SK-N-SH (cell line): ENCODE measurements at regions of chr11 and their contacts with region 1.

Region 1: GRCh38 chr11:61871158-61871597 is 20.2 kb downstream of the FADS3 start:
- DNase-seq: peak; percentile 94
- H3K4me3 ChIP-seq: peak overlapping the region; percentile 12 to 17; a peak in 2 of 4 replicates
- H3K27ac ChIP-seq: no peak overlapping the region
- H3K4me1 ChIP-seq: peaks cover 0 to 13% of the 10 kb centered on the region in 2 experiments; a peak in 2 of 4 replicates
- H3K27me3 ChIP-seq: no peaks in the 10 kb centered on the region
- CTCF ChIP-seq: peak; percentile 89
- EP300 ChIP-seq: no peak
- RAD21 ChIP-seq: peak; percentile 88

Region 2: DNA sequence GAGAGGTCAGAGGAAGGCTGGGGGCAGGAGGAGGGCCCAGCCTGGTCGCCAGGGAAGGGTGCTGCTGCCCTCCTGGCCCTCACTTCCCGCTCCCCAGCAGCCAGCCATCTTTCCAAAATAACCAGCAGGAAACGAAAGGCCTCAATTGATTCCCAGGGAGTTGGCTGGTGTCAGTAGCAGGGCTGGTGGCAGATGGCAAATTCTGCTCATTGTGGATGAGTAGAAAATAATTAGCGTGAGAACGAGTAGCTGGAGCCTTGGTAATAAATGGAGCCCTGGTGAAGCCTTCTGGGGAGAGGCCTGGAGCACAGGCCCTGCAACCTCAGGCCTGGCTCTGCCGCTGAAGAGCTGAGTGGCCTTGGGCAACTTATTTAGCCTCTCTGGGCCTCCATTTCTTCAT is 159.7 kb before region 1 on chr11:
- CTCF ChIA-PET with region 1: no interaction called
- POLR2A ChIA-PET with region 1: no interaction called
- DNase-seq: peak; percentile 56
- H3K4me3 ChIP-seq: no peak overlapping the region
- H3K27ac ChIP-seq: peak overlapping the region in 1 of 2 experiments; percentile 48; a peak in 1 of 4 replicates
- H3K4me1 ChIP-seq: peaks cover 0 to 18% of the 10 kb centered on the region in 2 experiments; a peak in 1 of 4 replicates
- H3K27me3 ChIP-seq: no peaks in the 10 kb centered on the region
- CTCF ChIP-seq: no peak
- EP300 ChIP-seq: no peak
- RAD21 ChIP-seq: no peak

Region 3: GRCh38 chr11:61827571-61828378 is 43.4 kb before region 1 on chr11 and contains the start of gene FADS2:
- CTCF ChIA-PET with region 1: interaction called, 19 read pairs
- POLR2A ChIA-PET with region 1: no interaction called
- DNase-seq: peak; percentile 93
- H3K4me3 ChIP-seq: peak within 1 kb of the TSS; percentile 70 to 96
- H3K27ac ChIP-seq: peak within 1 kb of the TSS; percentile 21 to 99
- H3K4me1 ChIP-seq: peaks cover 10 to 46% of the 10 kb centered on the region in 2 experiments; a peak in 3 of 4 replicates
- H3K27me3 ChIP-seq: no peaks in the 10 kb centered on the region
- CTCF ChIP-seq: no peak
- EP300 ChIP-seq: peak; percentile 16 to 32; a peak in 2 of 4 replicates
- RAD21 ChIP-seq: no peak
- polyA plus RNA-seq, gene FADS2: 67.8 and 77.1 TPM in 2 replicates

Region 4: DNA sequence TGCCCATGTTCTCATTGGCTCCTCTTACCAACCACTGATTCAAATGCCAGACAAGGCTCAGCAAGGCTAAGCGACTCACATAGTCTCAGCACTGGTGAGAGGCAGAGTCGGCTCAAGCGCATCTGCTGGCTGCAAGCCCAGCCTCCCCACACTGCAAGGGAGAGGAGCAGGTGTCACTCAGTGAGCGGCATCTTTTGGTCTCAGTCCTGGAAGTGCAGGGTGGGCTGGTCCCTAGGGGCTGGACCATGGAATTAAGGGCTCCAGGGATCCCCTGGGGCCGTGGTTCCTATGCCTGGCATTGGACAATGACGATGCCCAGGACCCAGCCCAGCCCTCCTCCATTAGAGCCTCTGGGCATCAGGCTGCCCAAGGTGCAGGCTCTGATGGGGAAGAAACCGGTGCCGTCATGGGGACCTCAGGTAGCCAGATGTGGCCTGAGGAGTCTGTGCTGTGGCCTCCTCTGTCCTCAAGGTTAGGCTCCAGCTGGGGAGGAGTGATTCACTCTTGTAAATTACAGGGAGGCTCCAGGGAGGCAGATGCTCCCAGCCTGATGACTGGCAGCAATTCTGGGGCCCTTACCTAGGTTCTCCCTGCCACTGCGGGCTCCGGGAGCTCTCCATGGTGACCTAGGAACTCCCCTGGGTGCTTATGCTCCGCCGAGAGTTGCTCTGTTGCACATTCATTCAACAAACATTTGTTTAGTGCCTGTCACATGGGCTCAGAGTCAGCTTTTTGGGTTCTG is 15.1 kb before region 1 on chr11:
- CTCF ChIA-PET with region 1: interaction called, 10 read pairs
- POLR2A ChIA-PET with region 1: no interaction called
- DNase-seq: no peak
- H3K4me3 ChIP-seq: no peak overlapping the region
- H3K27ac ChIP-seq: no peak overlapping the region; a peak in 1 of 4 replicates
- H3K4me1 ChIP-seq: peaks cover 3 to 7% of the 10 kb centered on the region in 2 experiments; a peak in 2 of 4 replicates
- H3K27me3 ChIP-seq: no peaks in the 10 kb centered on the region
- CTCF ChIP-seq: no peak
- EP300 ChIP-seq: no peak
- RAD21 ChIP-seq: no peak

Region 5: DNA sequence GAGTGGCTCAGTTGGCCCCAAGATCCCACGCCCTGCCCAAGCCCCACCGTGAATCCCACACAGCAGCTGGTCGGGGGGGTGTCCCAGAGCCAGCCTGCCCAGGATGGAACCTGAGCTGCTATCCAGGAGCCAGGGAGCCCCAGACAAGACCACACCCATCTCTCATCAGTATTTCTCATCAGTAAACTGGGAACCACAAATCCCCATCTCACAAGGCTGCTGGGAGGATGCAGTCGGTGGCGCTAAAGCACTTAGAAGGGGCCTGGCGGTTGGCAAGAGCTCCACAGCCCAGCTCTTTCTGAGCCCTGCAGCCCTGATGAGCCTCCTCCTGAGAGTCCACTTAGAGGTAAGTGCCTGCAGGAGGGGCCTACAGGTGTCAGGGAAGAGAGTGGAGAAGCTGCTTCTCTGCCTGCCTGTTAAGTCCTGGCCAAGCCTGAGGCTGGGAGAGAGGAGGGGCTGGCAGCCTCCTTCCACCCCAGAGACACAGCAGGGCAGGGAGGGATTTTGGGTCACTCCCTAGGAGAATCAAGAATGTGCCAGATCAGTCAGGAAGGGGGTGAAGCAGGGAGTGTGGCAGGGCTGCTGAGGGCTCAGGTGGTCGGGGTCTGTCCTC is 14.1 kb after region 1 on chr11:
- CTCF ChIA-PET with region 1: interaction called, 18 read pairs
- POLR2A ChIA-PET with region 1: interaction called, 3 read pairs
- DNase-seq: no peak
- H3K4me3 ChIP-seq: no peak overlapping the region
- H3K27ac ChIP-seq: no peak overlapping the region
- H3K4me1 ChIP-seq: peaks cover 7 to 11% of the 10 kb centered on the region in 2 experiments; a peak in 3 of 4 replicates
- H3K27me3 ChIP-seq: no peaks in the 10 kb centered on the region
- CTCF ChIP-seq: no peak
- EP300 ChIP-seq: no peak
- RAD21 ChIP-seq: no peak

Region 6: DNA sequence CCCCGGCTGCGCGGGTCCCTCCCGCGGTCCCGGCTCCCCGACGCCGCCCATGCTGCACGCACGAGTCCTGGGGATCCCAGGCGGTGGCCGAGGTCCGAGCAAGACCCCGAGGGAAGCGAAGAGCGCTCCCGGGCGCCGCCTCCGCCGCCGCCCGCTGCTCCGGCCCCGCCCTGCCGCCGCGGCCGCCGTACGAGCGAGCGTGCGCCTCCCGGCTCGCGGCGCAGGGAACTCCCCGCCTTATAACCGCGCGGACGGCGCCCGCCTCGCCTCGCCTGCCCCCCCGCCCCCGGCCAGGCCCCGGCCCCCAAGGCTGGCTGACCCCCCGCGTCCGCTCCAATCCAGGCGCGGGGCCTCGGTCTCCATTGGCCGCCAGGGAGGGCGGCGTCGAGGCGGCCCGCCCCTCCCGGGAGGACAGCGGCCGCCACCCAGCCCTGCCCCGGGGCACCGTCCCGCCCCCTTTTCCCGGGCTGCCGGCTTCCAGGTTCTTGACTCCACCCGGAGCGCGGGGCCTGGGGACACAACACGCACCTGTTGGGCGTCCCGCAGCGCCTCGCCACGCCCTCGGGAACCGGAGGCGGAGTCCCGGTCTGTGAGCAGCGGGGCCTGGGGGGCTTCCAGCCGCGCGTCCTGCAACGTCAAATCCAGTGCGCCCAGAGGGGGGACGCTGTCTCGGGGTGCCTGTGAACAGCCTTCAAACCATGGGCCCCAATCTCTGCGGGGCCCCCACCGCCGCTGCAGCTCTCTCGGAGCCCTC is 20.3 kb after region 1 on chr11 and contains the start of gene FADS3:
- CTCF ChIA-PET with region 1: interaction called, 91 read pairs
- POLR2A ChIA-PET with region 1: interaction called, 3 read pairs
- DNase-seq: peak; percentile 96
- H3K4me3 ChIP-seq: peak within 1 kb of the TSS; percentile 77 to 81
- H3K27ac ChIP-seq: peak within 1 kb of the TSS; percentile 24 to 31; a peak in 2 of 4 replicates
- H3K4me1 ChIP-seq: peaks cover 7 to 14% of the 10 kb centered on the region in 2 experiments; a peak in 3 of 4 replicates
- H3K27me3 ChIP-seq: no peaks in the 10 kb centered on the region
- CTCF ChIP-seq: no peak
- EP300 ChIP-seq: no peak
- RAD21 ChIP-seq: no peak
- polyA plus RNA-seq, gene FADS3: 93.3 and 116 TPM in 2 replicates